ENCODE measurements at regions of chr10 and their contacts with region 1.

Region 1: GRCh38 chr10:11113156-11113555 is 95.5 kb downstream of the CELF2 start:
- DNase-seq: no peak
- H3K4me3 Mint-ChIP-seq: no peak overlapping the region
- H3K27ac Mint-ChIP-seq: no peak overlapping the region
- H3K4me1 Mint-ChIP-seq: peaks cover 12% of the 10 kb centered on the region
- H3K27me3 Mint-ChIP-seq: peaks cover 6% of the 10 kb centered on the region

Region 2: DNA sequence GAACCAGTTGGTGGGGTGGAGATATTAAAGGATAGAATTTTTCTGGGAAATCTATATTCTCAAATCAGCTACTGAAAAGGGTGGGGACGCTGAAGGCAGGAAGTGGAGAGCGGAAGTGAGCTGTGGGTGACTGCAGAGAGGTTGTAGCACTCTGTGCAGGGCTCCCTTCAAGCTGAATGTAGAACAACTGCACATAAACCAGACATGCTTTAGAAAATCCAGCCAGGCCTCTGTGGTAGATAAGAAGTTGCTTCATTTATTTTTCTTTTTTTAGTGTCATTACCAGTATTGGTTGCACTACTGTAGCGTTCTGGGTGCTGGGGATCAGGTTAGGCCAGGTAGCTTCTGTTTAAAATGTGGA is 32.3 kb after region 1 on chr10:
- intact Hi-C with region 1: loop called (anchors 5 kb)
- DNase-seq: peak; percentile 69
- H3K4me3 Mint-ChIP-seq: peak overlapping the region; percentile 77
- H3K27ac Mint-ChIP-seq: peak overlapping the region; percentile 98
- H3K4me1 Mint-ChIP-seq: peaks cover 90% of the 10 kb centered on the region
- H3K27me3 Mint-ChIP-seq: no peaks in the 10 kb centered on the region

Region 3: GRCh38 chr10:11270135-11270857 is 157.1 kb after region 1 on chr10:
- intact Hi-C with region 1: loop called (anchors 2 kb)
- DNase-seq: peak; percentile 45
- H3K4me3 Mint-ChIP-seq: no peak overlapping the region
- H3K27ac Mint-ChIP-seq: peak overlapping the region; percentile 73
- H3K4me1 Mint-ChIP-seq: peaks cover 64% of the 10 kb centered on the region
- H3K27me3 Mint-ChIP-seq: no peaks in the 10 kb centered on the region

Measured in activated T-helper 2 cell treated with anti-CD3 and anti-CD28 coated beads, Interferon-gamma antibody, Interleukin-2, Interleukin-4, amounts not matched to agents 10 μg/mL and 5 μg/mL and 100 μg/mL, durations not matched to agents 14 hours and 24 hours and 36 hours (primary cell).